Prostate gland (tissue), 2 donors: ENCODE measurements at regions of chr14 and their contacts with region 1.

Region 1: GRCh38 chr14:20613094-20614037 is 22.2 kb upstream of the RNASE12 start:
- DNase-seq: peak; percentile 84
- H3K4me3 ChIP-seq: peak overlapping the region; percentile 37
- H3K27ac ChIP-seq: peak overlapping the region; percentile 67 to 76
- H3K4me1 ChIP-seq: no peaks in the 10 kb centered on the region
- H3K27me3 ChIP-seq: no peaks in the 10 kb centered on the region
- CTCF ChIP-seq: peak; percentile 63 to 96 (median 80)
- POLR2A ChIP-seq: no peak

Region 2: GRCh38 chr14:20314026-20314425 is 299.3 kb before region 1 on chr14:
- intact Hi-C with region 1: no loop called
- DNase-seq: no peak
- H3K4me3 ChIP-seq: no peak overlapping the region
- H3K27ac ChIP-seq: no peak overlapping the region
- H3K4me1 ChIP-seq: no peaks in the 10 kb centered on the region
- H3K27me3 ChIP-seq: no peaks in the 10 kb centered on the region
- CTCF ChIP-seq: no peak
- POLR2A ChIP-seq: no peak

Region 3: GRCh38 chr14:20332788-20333493 is 280.4 kb before region 1 on chr14 and contains the start of gene CCNB1IP1:
- intact Hi-C with region 1: loop called (anchors 5 kb)
- DNase-seq: peak; percentile 77
- H3K4me3 ChIP-seq: peak within 1 kb of the TSS; percentile 35 to 48
- H3K27ac ChIP-seq: peak within 1 kb of the TSS; percentile 75 to 83
- H3K4me1 ChIP-seq: no peaks in the 10 kb centered on the region
- H3K27me3 ChIP-seq: no peaks in the 10 kb centered on the region
- CTCF ChIP-seq: no peak
- POLR2A ChIP-seq: peak; percentile 33
- total RNA-seq, gene CCNB1IP1: 34.6 to 47.8 TPM

Region 4: GRCh38 chr14:20413045-20413799 is 200.1 kb before region 1 on chr14 and contains the start of gene TEP1:
- intact Hi-C with region 1: loop called (anchors 5 kb)
- DNase-seq: peak; percentile 88
- H3K4me3 ChIP-seq: peak within 1 kb of the TSS; percentile 81 to 84
- H3K27ac ChIP-seq: peak within 1 kb of the TSS; percentile 97 to 99
- H3K4me1 ChIP-seq: no peaks in the 10 kb centered on the region
- H3K27me3 ChIP-seq: no peaks in the 10 kb centered on the region
- CTCF ChIP-seq: peak in 1 of 4 experiments; percentile 7
- POLR2A ChIP-seq: peak; percentile 75
- total RNA-seq, gene TEP1: 25.8 to 31.0 TPM

Region 5: GRCh38 chr14:20461274-20462001 is 151.9 kb before region 1 on chr14 and contains the start of gene PIP4P1:
- intact Hi-C with region 1: loop called (anchors 5 kb)
- DNase-seq: peak; percentile 100
- H3K4me3 ChIP-seq: peak within 1 kb of the TSS; percentile 97 to 98
- H3K27ac ChIP-seq: peak within 1 kb of the TSS; percentile 98 to 99
- H3K4me1 ChIP-seq: peaks cover 2% of the 10 kb centered on the region
- H3K27me3 ChIP-seq: no peaks in the 10 kb centered on the region
- CTCF ChIP-seq: peak in 1 of 4 experiments; percentile 35
- POLR2A ChIP-seq: peak; percentile 83
- total RNA-seq, gene PIP4P1: 24.8 to 37.8 TPM

Region 6: DNA sequence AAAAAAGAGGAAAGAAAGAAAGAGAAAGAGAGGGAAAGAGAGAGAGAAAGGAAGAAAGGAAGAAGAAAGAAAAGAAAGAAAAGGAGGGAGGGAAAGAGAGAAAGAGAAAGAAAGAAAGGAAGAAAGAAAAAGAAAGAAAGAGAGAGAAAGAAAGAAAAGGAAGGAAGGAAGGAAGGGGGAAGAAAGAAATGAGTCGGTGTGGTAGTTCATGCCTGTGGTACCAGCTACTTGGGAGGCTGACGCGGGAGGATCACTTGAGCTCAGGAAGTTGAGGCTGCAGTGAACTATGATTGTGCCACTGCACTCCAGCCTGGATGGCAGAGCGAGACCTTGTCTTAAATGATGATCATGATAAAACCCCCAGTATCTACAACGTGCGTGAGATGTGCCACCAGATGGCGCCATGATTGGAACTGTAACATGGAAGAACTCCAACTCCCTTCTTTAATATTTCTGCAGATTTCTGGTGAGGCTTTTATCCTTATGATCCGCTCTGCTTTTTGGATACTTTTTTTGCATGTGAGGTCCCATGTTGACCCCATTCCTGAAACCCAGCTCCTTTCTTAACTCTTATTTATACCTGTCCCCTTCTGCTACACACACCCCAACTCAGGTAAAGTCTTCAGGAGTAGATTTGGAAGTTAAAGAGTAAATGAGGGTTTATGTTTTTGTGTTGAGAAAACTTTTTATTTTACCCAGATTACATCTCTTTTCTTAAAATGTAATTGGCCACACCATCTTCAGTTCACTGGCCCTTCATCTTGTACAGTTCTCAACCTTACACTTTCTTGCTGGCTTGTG is 82.4 kb before region 1 on chr14:
- intact Hi-C with region 1: loop called (anchors 2 kb)
- DNase-seq: peak; percentile 71
- H3K4me3 ChIP-seq: no peak overlapping the region
- H3K27ac ChIP-seq: no peak overlapping the region
- H3K4me1 ChIP-seq: no peaks in the 10 kb centered on the region
- H3K27me3 ChIP-seq: no peaks in the 10 kb centered on the region
- CTCF ChIP-seq: peak; percentile 31 to 74 (median 53)
- POLR2A ChIP-seq: no peak

Region 7: GRCh38 chr14:20682435-20683124 is 69.2 kb after region 1 on chr14:
- intact Hi-C with region 1: loop called (anchors 2 kb)
- DNase-seq: peak; percentile 90
- H3K4me3 ChIP-seq: peak overlapping the region; percentile 65 to 73
- H3K27ac ChIP-seq: peak overlapping the region; percentile 99 to 100
- H3K4me1 ChIP-seq: no peaks in the 10 kb centered on the region
- H3K27me3 ChIP-seq: no peaks in the 10 kb centered on the region
- CTCF ChIP-seq: no peak
- POLR2A ChIP-seq: peak; percentile 91

Region 8: DNA sequence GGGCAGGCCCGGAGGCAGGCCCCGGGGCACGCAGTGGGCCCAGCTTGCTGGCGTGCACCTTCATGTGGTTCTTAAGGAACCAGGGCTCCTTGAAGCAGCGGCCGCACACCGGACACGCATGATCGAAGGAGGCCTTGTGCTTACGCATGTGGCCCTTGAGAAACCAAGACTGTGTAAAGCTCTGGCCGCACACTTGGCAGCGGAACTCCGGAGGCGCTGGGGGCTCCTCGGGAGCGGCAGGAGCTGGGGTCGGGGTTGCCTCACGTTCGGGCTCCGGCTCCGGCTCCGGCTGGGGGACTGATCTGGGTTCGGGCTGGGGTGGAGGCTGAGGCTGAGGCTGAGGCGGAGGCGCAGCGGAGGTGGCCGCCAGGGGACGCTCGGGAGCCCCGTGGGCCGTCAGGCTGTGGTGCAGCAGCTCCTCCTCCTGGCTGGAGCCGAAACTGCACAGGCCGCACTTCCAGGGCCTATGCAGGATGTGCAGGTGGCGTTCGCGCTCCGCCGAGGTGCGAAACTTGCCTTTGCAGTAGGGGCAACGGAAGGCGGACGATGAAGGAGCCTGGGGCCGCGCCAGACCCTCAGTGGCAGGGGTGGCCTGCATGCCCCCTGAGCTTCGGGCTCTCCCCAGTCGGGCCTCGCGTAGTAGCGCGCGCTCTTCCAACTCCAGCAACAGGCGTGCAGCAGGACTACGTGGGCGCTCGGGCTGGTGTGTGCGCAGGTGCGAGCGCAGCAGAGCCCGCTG is 479.1 kb after region 1 on chr14:
- intact Hi-C with region 1: loop called (anchors 10 kb)
- DNase-seq: peak; percentile 77
- H3K4me3 ChIP-seq: no peak overlapping the region
- H3K27ac ChIP-seq: no peak overlapping the region
- H3K4me1 ChIP-seq: no peaks in the 10 kb centered on the region
- H3K27me3 ChIP-seq: no peaks in the 10 kb centered on the region
- CTCF ChIP-seq: peak; percentile 99 to 100 (median 100)
- POLR2A ChIP-seq: peak; percentile 3